Activated naive CD4-positive, alpha-beta T cell treated with anti-CD3 and anti-CD28 coated beads for 36 hours (primary cell): ENCODE measurements at regions of chr18 and their contacts with region 1.

Region 1: DNA sequence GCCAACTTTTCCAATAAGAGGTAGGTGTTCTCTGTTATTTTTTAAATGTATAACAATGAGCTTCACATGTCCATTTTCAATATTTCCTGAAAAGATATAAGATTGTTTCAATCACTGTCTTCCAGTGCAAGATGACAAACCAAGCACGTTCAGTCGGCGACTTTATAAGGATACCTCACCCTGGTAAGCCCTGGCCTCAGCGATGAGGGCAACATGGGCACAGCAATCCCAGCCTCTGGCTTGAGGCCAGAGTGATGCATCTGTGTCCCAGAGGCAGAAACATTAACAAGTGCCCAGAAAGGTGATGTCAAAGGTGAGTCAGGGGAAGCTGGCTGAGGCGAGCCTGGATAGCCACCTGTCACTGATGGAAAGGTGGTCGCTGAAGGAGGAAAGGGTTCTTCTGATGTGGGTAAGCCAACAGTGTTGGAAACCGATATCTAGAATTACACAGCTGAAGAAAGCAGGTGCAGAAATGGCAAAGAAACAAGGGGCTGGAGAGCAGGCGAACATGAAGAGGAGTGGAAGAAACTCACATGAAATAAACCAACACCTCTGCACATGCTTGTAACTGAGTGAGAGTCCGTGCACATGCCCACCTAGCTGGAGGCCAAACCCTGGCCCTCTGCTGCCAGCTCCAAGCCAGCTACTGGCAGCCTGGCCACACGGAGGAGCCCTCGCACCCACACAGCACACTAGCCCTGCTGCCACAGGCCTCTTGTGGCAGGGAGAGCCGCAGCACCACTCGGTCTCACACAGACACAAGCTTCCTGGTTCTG is 65.5 kb downstream of the FBXO15 start:
- DNase-seq: peak; percentile 82
- H3K4me3 Mint-ChIP-seq: peak overlapping the region; percentile 71
- H3K27ac Mint-ChIP-seq: peak overlapping the region; percentile 87
- H3K4me1 Mint-ChIP-seq: peaks cover 16% of the 10 kb centered on the region
- H3K27me3 Mint-ChIP-seq: no peaks in the 10 kb centered on the region

Region 2: GRCh38 chr18:74040459-74041332 is 41.5 kb before region 1 on chr18:
- CTCF ChIA-PET with region 1: interaction called, 11 read pairs
- intact Hi-C with region 1: loop called (anchors 1 kb)
- DNase-seq: peak; percentile 87
- H3K4me3 Mint-ChIP-seq: no peak overlapping the region
- H3K27ac Mint-ChIP-seq: no peak overlapping the region
- H3K4me1 Mint-ChIP-seq: no peaks in the 10 kb centered on the region
- H3K27me3 Mint-ChIP-seq: peaks cover 2% of the 10 kb centered on the region

Region 3: GRCh38 chr18:74097598-74098202 is 15.5 kb after region 1 on chr18:
- CTCF ChIA-PET with region 1: interaction called, 15 read pairs
- intact Hi-C with region 1: no loop called
- DNase-seq: no peak
- H3K4me3 Mint-ChIP-seq: no peak overlapping the region
- H3K27ac Mint-ChIP-seq: no peak overlapping the region
- H3K4me1 Mint-ChIP-seq: no peaks in the 10 kb centered on the region
- H3K27me3 Mint-ChIP-seq: peaks cover 2% of the 10 kb centered on the region

Region 4: GRCh38 chr18:74116633-74117554 is 34.7 kb after region 1 on chr18:
- CTCF ChIA-PET with region 1: interaction called, 46 read pairs
- intact Hi-C with region 1: loop called (anchors 1 kb)
- DNase-seq: peak; percentile 69
- H3K4me3 Mint-ChIP-seq: no peak overlapping the region
- H3K27ac Mint-ChIP-seq: no peak overlapping the region
- H3K4me1 Mint-ChIP-seq: peaks cover 17% of the 10 kb centered on the region
- H3K27me3 Mint-ChIP-seq: no peaks in the 10 kb centered on the region

Region 5: DNA sequence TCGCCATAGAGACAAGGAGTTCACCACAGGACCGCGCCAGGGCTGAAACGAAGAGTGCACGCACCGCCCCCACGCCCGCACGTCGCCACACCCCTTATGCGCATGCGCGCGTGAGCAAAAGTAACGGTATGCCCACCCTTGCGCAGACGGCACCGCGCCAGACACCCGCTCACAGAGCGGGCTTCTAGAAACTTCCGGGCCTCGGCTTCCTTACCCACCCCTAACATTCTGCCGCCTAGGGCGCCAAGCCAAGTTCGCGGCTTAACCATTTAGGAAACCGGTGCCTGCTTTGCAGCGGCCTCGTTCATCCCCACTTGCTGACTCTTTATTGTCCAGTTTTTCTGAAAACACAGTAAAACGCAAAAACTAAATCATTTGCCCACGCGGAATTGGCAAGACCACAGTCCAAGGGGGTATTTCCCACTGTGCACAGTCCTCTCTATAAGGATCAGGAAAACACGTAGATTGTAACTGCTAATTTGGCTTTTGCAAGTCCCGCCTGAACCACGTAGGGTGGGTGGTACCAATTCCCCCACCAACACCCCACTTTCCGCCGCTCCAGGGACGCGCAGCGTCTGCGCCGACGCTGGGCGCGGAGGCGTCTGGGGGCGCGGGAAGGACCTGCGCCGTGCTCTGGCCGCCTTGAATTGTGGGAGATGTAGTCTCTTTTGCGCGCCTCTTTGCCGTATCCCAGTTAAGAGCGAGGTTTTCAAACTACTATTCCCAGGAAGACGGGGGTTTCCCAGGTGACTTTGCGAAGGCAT is 65.8 kb after region 1 on chr18 and contains the starts of genes FBXO15 and TIMM21:
- CTCF ChIA-PET with region 1: interaction called, 22 read pairs
- intact Hi-C with region 1: loop called (anchors 1 kb)
- DNase-seq: peak; percentile 95
- H3K4me3 Mint-ChIP-seq: peak within 1 kb of the TSS; percentile 96
- H3K27ac Mint-ChIP-seq: peak within 1 kb of the TSS; percentile 97
- H3K4me1 Mint-ChIP-seq: peaks cover 42% of the 10 kb centered on the region
- H3K27me3 Mint-ChIP-seq: no peaks in the 10 kb centered on the region
- total RNA-seq, gene FBXO15: 1.2 to 1.3 TPM
- total RNA-seq, gene TIMM21: 35.6 to 37.7 TPM

Region 6: DNA sequence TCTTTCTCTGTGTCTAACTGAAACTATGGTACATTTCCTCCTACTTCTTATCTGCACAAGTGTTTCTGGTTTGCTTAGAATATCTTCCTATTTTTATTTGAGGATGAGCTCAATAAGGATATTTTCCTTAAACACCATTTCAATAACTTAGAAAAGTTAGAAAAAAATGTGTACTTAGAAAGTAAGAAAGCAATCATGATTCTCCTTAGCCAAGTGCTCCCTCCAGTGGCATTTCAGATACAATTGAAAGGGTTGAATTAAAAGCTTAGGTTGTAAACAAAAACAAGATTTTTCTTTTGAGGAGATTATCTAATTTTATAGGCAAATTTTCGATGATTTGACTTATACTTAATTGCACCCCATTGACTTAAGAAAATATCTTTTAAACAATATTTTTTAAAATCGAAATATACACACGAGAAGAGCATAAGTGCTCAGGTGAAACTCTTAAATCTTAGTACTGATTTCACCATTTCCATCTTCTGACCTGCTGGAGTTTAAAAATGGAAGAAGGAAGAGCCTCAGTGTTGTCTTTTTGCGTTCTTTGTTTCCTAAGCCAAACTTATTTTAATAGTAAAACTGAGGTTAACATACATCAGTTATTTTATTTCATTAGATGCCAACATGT is 260.4 kb after region 1 on chr18:
- CTCF ChIA-PET with region 1: interaction called, 13 read pairs
- intact Hi-C with region 1: loop called (anchors 2 kb)
- DNase-seq: peak; percentile 56
- H3K4me3 Mint-ChIP-seq: no peak overlapping the region
- H3K27ac Mint-ChIP-seq: no peak overlapping the region
- H3K4me1 Mint-ChIP-seq: no peaks in the 10 kb centered on the region
- H3K27me3 Mint-ChIP-seq: peaks cover 2% of the 10 kb centered on the region